ENCODE measurements at regions of chr2 and their contacts with region 1.

Region 1: DNA sequence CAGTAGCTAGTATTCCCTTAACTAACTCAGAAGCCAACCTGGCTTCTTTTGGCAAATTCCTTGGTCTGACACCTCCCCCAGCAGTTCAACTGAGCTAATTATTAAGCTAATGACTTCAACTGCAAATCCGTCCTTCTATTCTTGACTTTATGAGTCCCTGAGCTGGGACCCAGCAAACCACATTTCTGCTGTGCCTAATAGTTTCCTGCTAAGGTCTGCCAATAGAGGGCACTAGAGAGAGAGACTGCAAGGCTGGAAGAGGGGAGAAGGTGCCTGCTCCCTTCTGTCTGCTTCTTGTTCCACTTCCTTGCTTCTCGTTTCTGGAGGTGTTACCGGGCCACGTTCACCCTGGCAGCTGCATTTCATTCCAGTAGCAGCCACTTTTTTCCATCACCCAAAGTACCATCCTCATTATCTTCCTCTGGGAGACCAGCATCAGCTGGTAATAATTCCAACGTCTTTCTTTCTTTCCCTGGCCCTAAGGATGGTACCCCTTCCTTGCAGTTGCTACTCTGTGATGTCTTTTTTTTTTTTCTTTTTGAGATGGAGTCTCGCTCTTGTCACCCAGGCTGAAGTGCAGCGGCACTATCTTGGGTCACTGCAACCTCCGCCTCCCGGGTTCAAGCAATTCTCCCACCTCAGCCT is 352.0 kb downstream of the TNS1 start:
- DNase-seq: peak; percentile 42
- H3K4me3 ChIP-seq: no peak overlapping the region
- H3K27ac ChIP-seq: peak overlapping the region in 1 of 2 donors; percentile 3
- H3K4me1 ChIP-seq: no peaks in the 10 kb centered on the region
- H3K27me3 ChIP-seq: no peaks in the 10 kb centered on the region
- CTCF ChIP-seq: peak; percentile 43 to 67 (median 60)
- POLR2A ChIP-seq: no peak

Region 2: GRCh38 chr2:217353591-217353990 is 297.2 kb before region 1 on chr2:
- intact Hi-C with region 1: no loop called
- DNase-seq: no peak
- H3K4me3 ChIP-seq: no peak overlapping the region
- H3K27ac ChIP-seq: no peak overlapping the region
- H3K4me1 ChIP-seq: no peaks in the 10 kb centered on the region
- H3K27me3 ChIP-seq: no peaks in the 10 kb centered on the region
- CTCF ChIP-seq: no peak
- POLR2A ChIP-seq: no peak

Region 3: DNA sequence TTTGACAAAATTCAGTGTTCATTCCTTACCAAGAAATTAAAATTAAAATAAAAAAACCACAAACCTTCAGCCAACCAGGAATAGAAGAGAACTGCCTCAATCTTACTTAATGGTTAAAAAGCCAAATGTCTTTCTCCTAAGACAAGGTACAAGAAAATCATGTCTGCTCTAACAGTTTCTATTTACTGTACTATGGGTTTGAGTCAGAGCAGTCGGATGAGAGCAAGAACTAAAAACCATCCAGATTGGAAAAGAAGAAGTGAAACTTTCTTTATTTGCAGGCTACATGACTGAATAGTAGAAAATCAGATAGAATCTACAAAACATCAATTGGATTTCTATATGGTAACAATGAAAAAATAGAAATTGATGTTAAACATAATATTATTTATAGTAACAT is 235.5 kb before region 1 on chr2:
- intact Hi-C with region 1: loop called (anchors 10 kb)
- DNase-seq: no peak
- H3K4me3 ChIP-seq: no peak overlapping the region
- H3K27ac ChIP-seq: no peak overlapping the region
- H3K4me1 ChIP-seq: no peaks in the 10 kb centered on the region
- H3K27me3 ChIP-seq: no peaks in the 10 kb centered on the region
- CTCF ChIP-seq: no peak
- POLR2A ChIP-seq: no peak

Region 4: GRCh38 chr2:217521820-217522219 is 129.0 kb before region 1 on chr2:
- intact Hi-C with region 1: no loop called
- DNase-seq: no peak
- H3K4me3 ChIP-seq: no peak overlapping the region
- H3K27ac ChIP-seq: no peak overlapping the region
- H3K4me1 ChIP-seq: no peaks in the 10 kb centered on the region
- H3K27me3 ChIP-seq: no peaks in the 10 kb centered on the region
- CTCF ChIP-seq: no peak
- POLR2A ChIP-seq: no peak

Region 5: GRCh38 chr2:217691920-217692666 is 41.3 kb after region 1 on chr2:
- intact Hi-C with region 1: loop called (anchors 5 kb)
- DNase-seq: no peak
- H3K4me3 ChIP-seq: no peak overlapping the region
- H3K27ac ChIP-seq: peak overlapping the region; percentile 7 to 61
- H3K4me1 ChIP-seq: no peaks in the 10 kb centered on the region
- H3K27me3 ChIP-seq: no peaks in the 10 kb centered on the region
- CTCF ChIP-seq: no peak
- POLR2A ChIP-seq: no peak

Measured in prostate gland (tissue), 2 donors.